ENCODE measurements at regions of chr15 and their contacts with region 1.

Region 1: GRCh38 chr15:73697033-73697467 is 12.9 kb downstream of the CD276 start:
- DNase-seq: peak; percentile 92
- ATAC-seq: peak; percentile 93
- H3K4me3 Mint-ChIP-seq: no peak overlapping the region
- H3K27ac Mint-ChIP-seq: no peak overlapping the region
- H3K4me1 Mint-ChIP-seq: peaks cover 19% of the 10 kb centered on the region
- H3K27me3 Mint-ChIP-seq: peaks cover 58% of the 10 kb centered on the region
- CTCF ChIP-seq: no peak

Region 2: GRCh38 chr15:73240866-73241499 is 456.1 kb before region 1 on chr15:
- CTCF ChIA-PET with region 1: interaction called, 11 read pairs
- POLR2A ChIA-PET with region 1: no interaction called
- intact Hi-C with region 1: no loop called
- DNase-seq: peak; percentile 87
- ATAC-seq: no peak
- H3K4me3 Mint-ChIP-seq: no peak overlapping the region
- H3K27ac Mint-ChIP-seq: no peak overlapping the region
- H3K4me1 Mint-ChIP-seq: no peaks in the 10 kb centered on the region
- H3K27me3 Mint-ChIP-seq: no peaks in the 10 kb centered on the region
- CTCF ChIP-seq: peak; percentile 85

Region 3: DNA sequence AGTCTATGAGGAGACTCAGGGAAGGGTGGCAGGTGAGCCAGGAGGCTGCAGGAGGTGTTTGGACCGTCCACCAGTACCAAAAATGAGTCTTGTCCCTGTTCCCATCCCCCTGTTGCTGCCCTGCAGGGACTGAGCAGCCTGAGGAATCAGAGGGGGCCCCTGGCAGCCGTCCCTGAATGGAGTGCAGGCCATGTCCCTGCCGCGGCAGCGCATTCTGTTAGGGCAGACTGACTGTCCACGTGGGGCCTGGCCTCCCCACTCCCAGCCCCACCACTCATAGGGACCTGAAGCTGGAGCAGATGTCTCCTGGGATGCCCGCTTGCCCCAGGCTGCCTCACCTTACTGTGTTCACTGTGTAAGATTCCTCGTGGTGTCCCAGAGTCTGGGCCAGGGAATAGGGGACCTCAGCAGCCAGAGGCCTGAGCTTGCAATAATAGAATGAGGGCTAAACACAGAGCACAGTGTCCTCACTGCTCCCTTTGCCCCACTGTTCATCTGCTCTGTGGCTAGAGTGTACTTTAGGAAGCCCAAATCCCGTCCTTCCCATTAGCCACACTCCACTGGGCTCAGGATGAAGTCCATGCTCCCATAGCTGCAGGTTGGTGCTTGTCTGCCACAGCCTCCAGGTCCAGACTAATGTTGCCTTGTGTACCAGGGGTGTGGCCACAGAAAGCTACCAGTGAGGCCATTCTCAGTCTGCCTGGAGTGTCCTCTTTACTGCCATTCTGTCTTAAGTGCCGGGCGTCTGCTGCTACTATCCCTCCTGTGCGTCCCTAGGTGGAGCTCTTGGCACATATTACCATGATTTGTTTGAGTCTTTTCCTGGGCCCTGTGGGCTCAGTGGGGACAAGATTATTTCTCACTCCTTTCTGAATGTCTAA is 391.5 kb before region 1 on chr15:
- CTCF ChIA-PET with region 1: no interaction called
- POLR2A ChIA-PET with region 1: no interaction called
- intact Hi-C with region 1: loop called (anchors 10 kb)
- DNase-seq: peak; percentile 55
- ATAC-seq: no peak
- H3K4me3 Mint-ChIP-seq: no peak overlapping the region
- H3K27ac Mint-ChIP-seq: no peak overlapping the region
- H3K4me1 Mint-ChIP-seq: peaks cover 8% of the 10 kb centered on the region
- H3K27me3 Mint-ChIP-seq: peaks cover 3% of the 10 kb centered on the region
- CTCF ChIP-seq: peak; percentile 49

Region 4: GRCh38 chr15:73560501-73561117 is 136.4 kb before region 1 on chr15:
- CTCF ChIA-PET with region 1: interaction called, 17 read pairs
- POLR2A ChIA-PET with region 1: no interaction called
- intact Hi-C with region 1: loop called (anchors 5 kb)
- DNase-seq: peak; percentile 26
- ATAC-seq: no peak
- H3K4me3 Mint-ChIP-seq: no peak overlapping the region
- H3K27ac Mint-ChIP-seq: no peak overlapping the region
- H3K4me1 Mint-ChIP-seq: peaks cover 5% of the 10 kb centered on the region
- H3K27me3 Mint-ChIP-seq: no peaks in the 10 kb centered on the region
- CTCF ChIP-seq: peak; percentile 52

Region 5: DNA sequence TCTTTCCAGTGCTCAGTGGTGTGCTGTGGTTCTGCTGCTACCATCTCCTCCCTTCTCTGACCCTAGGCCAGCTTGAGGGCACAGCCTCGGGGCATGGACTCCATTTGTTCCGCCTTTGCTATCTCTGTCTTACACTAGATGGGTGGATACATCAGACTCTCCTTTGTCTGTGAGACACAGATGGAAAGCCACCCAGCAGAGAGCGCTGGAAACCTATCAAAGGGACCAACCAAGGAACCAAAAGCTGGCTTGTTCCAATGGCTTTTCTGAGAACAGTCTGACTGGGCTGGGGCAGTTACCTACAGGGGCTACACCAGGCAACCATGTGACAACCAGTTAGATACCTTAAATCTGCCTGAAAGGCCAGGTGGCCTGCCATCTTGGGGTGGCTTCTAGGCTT is 127.7 kb before region 1 on chr15:
- CTCF ChIA-PET with region 1: interaction called, 11 read pairs
- POLR2A ChIA-PET with region 1: no interaction called
- intact Hi-C with region 1: loop called (anchors 5 kb)
- DNase-seq: no peak
- ATAC-seq: no peak
- H3K4me3 Mint-ChIP-seq: no peak overlapping the region
- H3K27ac Mint-ChIP-seq: peak overlapping the region; percentile 20
- H3K4me1 Mint-ChIP-seq: peaks cover 5% of the 10 kb centered on the region
- H3K27me3 Mint-ChIP-seq: no peaks in the 10 kb centered on the region
- CTCF ChIP-seq: no peak

Region 6: DNA sequence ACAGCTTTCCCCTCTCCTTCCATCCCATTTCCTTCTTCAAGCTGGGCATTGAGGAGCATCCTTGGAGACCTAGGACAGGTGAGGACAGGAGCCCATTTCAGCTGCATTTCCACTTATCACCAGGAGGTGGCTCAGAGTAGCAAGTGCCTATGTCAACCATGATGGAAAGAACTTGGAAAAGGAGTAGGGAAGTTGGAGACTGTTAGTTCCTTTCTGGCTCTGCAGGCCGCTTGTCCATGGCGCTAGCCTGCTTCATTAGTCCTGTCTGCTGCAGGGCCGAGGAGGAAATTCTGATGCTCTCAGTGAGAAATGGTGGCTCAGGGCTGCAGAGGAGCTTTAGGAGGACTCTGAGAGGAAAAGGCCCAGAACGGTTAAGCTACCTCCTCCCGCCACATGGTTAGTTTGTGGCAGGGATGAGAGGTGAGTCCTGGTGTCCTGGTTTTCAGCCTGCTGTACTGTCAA is 19.9 kb before region 1 on chr15:
- CTCF ChIA-PET with region 1: interaction called, 165 read pairs
- POLR2A ChIA-PET with region 1: interaction called, 3 read pairs
- intact Hi-C with region 1: loop called (anchors 2 kb)
- DNase-seq: peak; percentile 59
- ATAC-seq: peak; percentile 79
- H3K4me3 Mint-ChIP-seq: no peak overlapping the region
- H3K27ac Mint-ChIP-seq: no peak overlapping the region
- H3K4me1 Mint-ChIP-seq: peaks cover 8% of the 10 kb centered on the region
- H3K27me3 Mint-ChIP-seq: peaks cover 30% of the 10 kb centered on the region
- CTCF ChIP-seq: peak; percentile 85

Region 7: GRCh38 chr15:73683777-73684580 is 13.1 kb before region 1 on chr15 and contains the start of gene CD276:
- CTCF ChIA-PET with region 1: interaction called, 165 read pairs
- POLR2A ChIA-PET with region 1: interaction called, 4 read pairs
- intact Hi-C with region 1: no loop called
- DNase-seq: peak; percentile 19
- ATAC-seq: peak; percentile 53
- H3K4me3 Mint-ChIP-seq: peak within 1 kb of the TSS; percentile 50
- H3K27ac Mint-ChIP-seq: no peak within 1 kb of the TSS
- H3K4me1 Mint-ChIP-seq: peaks cover 16% of the 10 kb centered on the region
- H3K27me3 Mint-ChIP-seq: peaks cover 55% of the 10 kb centered on the region
- CTCF ChIP-seq: no peak
- total RNA-seq, gene CD276: 0.31 to 0.45 TPM

Measured in activated CD8-positive, alpha-beta T cell treated with anti-CD3 and anti-CD28 coated beads for 36 hours (primary cell).